Heart left ventricle (tissue), 16 donors: ENCODE measurements at regions of chr1 and their contacts with region 1.

Region 1: GRCh38 chr1:184892116-184892515 is 82.2 kb downstream of the NIBAN1 start:
- DNase-seq: no peak
- ATAC-seq: no peak
- H3K4me3 ChIP-seq: no peak overlapping the region
- H3K27ac ChIP-seq: peak overlapping the region in 11 of 12 donors; percentile 8 to 90 (median 81)
- H3K4me1 ChIP-seq: peaks cover 0 to 84% (median 52%) of the 10 kb centered on the region in 12 donors
- H3K27me3 ChIP-seq: no peaks in the 10 kb centered on the region
- CTCF ChIP-seq: no peak
- POLR2A ChIP-seq: no peak

Region 2: GRCh38 chr1:184954231-184954995 is 62.3 kb after region 1 on chr1:
- intact Hi-C with region 1: loop called in 2 of 10 experiments (anchors 5 kb)
- DNase-seq: no peak
- ATAC-seq: peak in 3 of 4 donors; percentile 37 to 42 (median 41)
- H3K4me3 ChIP-seq: no peak overlapping the region
- H3K27ac ChIP-seq: peak overlapping the region; percentile 24 to 77 (median 58)
- H3K4me1 ChIP-seq: peaks cover 0 to 66% (median 28%) of the 10 kb centered on the region in 12 donors
- H3K27me3 ChIP-seq: no peaks in the 10 kb centered on the region
- CTCF ChIP-seq: peak in 1 of 12 donors; percentile 10
- POLR2A ChIP-seq: no peak

Region 3: GRCh38 chr1:184965944-184966860 is 74.1 kb after region 1 on chr1:
- intact Hi-C with region 1: loop called in 5 of 10 experiments (anchors 5 to 10 kb)
- DNase-seq: no peak
- ATAC-seq: peak in 2 of 4 donors; percentile 9 to 27
- H3K4me3 ChIP-seq: no peak overlapping the region
- H3K27ac ChIP-seq: peak overlapping the region in 11 of 12 donors; percentile 9 to 56 (median 47)
- H3K4me1 ChIP-seq: peaks cover 0 to 67% (median 33%) of the 10 kb centered on the region in 12 donors
- H3K27me3 ChIP-seq: no peaks in the 10 kb centered on the region
- CTCF ChIP-seq: no peak
- POLR2A ChIP-seq: no peak

Region 4: GRCh38 chr1:184973272-184974055 is 81.3 kb after region 1 on chr1:
- intact Hi-C with region 1: loop called in 5 of 10 experiments (anchors 5 to 10 kb)
- DNase-seq: peak; percentile 51 to 74 (median 68)
- ATAC-seq: peak; percentile 10 to 76 (median 60)
- H3K4me3 ChIP-seq: peak overlapping the region; percentile 65 to 98 (median 83)
- H3K27ac ChIP-seq: peak overlapping the region; percentile 74 to 94 (median 92)
- H3K4me1 ChIP-seq: peaks cover 0 to 52% (median 20%) of the 10 kb centered on the region in 12 donors
- H3K27me3 ChIP-seq: no peaks in the 10 kb centered on the region
- CTCF ChIP-seq: no peak
- POLR2A ChIP-seq: no peak